ENCODE measurements at regions of chr17 and their contacts with region 1.

Region 1: GRCh38 chr17:18203308-18203707 is 19.7 kb downstream of the ALKBH5 start:
- DNase-seq: no peak
- H3K4me3 ChIP-seq: no peak overlapping the region
- H3K27ac ChIP-seq: no peak overlapping the region
- H3K4me1 ChIP-seq: peaks cover 0 to 9% (median 0%) of the 10 kb centered on the region in 4 donors
- H3K27me3 ChIP-seq: no peaks in the 10 kb centered on the region
- CTCF ChIP-seq: no peak
- EP300 ChIP-seq: no peak
- POLR2A ChIP-seq: no peak

Region 2: DNA sequence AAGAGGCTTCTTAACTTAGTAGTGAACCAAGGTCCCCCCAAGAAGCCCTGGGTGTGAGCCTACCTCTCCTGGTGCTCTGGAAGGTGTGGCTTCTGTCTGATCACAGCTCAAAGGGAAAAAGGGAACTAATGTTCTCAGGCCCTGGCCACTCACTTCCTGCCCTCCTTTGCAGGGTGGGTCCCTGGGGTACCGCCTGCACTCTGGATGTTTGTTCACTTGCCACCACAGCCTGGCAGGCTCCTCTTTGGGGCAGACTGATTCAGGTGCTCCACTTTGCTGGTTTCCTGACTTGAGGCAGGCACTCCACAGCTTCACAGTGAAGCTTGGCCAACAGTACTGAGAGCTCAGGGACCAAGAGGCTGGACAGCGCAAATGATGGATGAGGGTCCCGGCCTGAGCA is 100.7 kb before region 1 on chr17:
- in situ Hi-C with region 1: no loop called
- intact Hi-C with region 1: no loop called
- DNase-seq: no peak
- H3K4me3 ChIP-seq: no peak overlapping the region
- H3K27ac ChIP-seq: no peak overlapping the region
- H3K4me1 ChIP-seq: no peaks in the 10 kb centered on the region
- H3K27me3 ChIP-seq: no peaks in the 10 kb centered on the region
- CTCF ChIP-seq: no peak
- EP300 ChIP-seq: no peak
- POLR2A ChIP-seq: no peak

Region 3: DNA sequence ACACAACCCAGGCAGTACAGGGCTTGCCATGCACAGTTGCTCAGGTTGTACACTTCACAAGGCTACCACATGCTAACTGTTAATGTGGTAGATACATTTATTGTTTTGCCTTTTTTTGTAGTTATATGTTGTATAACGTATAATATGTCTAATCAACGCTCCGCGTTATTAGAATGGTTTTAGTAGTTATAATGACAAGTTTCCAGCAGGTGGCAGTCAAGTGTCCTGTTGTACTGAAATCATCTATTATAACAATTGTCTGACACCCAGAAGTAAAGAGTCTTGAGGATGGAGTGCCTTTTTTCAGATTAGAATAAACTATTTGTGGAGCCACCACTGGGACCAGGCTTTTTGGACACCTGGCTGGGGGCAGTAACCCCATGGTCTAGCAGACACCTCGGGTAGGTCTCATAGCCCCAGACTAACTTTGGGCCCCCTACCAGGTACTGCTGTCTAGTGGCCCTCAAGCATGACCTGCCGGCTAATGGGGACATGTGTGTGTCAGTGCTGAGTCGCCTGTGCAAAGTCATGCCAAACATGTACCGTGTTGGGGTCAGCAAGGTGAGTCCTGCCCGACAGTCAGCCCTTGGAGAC is 62.0 kb before region 1 on chr17:
- in situ Hi-C with region 1: no loop called
- intact Hi-C with region 1: loop called (anchors 10 kb)
- DNase-seq: no peak
- H3K4me3 ChIP-seq: no peak overlapping the region
- H3K27ac ChIP-seq: no peak overlapping the region
- H3K4me1 ChIP-seq: no peaks in the 10 kb centered on the region
- H3K27me3 ChIP-seq: peaks cover 6% of the 10 kb centered on the region
- CTCF ChIP-seq: peak; percentile 55 to 71 (median 67)
- EP300 ChIP-seq: no peak
- POLR2A ChIP-seq: no peak